ENCODE measurements at regions of chr3 and their contacts with region 1.

Region 1: DNA sequence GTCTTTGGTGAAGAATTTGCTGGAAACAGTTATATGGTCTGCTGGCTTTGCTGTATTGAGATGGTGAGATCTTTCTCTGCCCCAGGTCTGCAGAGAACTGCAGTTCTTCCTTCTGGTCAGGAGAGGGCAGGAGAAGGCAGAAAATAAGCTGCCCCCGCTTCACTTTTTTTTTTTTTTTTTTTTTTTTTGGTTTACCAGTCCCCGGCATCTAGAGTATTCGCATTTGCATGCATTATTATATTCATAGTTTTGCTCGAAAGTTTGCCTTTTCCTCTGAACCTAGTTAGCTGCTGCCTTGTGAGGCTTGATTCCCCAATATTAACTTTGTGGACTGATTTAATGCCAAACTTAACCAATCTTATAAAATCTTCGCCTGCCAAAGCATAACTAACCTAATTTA is 10.6 kb upstream of the PARL start:
- DNase-seq: peak; percentile 86
- CTCF ChIP-seq: peak; percentile 79

Region 2: DNA sequence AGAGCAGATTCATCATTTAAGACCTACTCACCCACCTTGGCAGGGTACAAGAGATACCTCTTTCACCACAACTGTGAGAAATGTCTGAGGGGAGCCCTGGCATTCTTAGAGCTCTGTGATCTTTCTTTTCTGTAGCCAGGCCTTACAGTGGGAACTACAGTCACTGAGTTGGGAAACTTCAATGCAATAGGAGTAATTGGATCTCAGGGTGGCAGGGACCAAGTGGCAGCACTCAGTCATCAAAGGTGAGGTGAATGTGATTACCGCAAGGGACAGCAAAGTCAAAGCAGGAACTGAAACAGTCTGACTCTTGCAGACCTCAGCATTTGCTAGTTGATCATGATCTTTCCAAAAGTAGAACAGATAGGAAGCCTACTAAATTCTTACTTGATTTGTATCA is 459.6 kb before region 1 on chr3:
- CTCF ChIA-PET with region 1: no interaction called
- POLR2A ChIA-PET with region 1: no interaction called
- DNase-seq: peak; percentile 59
- CTCF ChIP-seq: no peak

Region 3: GRCh38 chr3:183878071-183878470 is 17.2 kb before region 1 on chr3:
- CTCF ChIA-PET with region 1: interaction called, 11 read pairs
- POLR2A ChIA-PET with region 1: no interaction called
- DNase-seq: no peak
- CTCF ChIP-seq: no peak

Region 4: GRCh38 chr3:183884427-183885296 is 10.6 kb before region 1 on chr3 and contains the start of gene PARL:
- CTCF ChIA-PET with region 1: interaction called, 55 read pairs
- POLR2A ChIA-PET with region 1: no interaction called
- DNase-seq: peak; percentile 94
- CTCF ChIP-seq: peak; percentile 97

Region 5: DNA sequence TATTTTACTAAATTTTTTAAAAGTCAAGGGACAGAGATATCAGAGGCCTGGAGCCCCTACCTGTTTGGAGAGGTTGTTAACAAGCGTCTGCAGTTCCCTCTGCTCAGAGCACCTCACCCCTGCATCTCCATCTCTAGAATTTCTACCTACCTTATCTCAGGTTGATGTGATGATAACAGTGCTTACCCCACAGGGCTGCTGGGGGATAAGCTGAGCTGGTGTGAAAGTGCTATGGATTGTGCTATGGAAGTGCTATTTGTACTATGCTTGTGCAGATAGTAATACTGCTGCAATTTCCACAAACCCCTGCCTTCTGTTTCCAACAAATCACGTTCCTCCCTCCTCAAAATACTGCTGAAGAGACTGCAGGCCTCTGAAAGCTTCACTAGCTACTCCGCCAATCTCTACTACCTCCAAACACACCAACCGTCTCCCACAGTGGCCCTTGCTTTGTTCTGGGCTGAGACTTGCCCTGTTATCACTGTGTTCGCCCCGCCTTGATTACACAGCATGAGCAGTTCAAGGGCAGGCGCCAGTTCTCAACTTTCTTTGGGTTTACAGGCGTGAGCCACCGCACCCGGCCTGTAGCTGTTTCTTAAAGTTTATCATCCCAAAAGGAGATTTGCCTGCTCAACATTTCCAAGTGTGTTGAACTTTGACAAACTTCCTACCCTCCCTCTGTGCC is 17.7 kb after region 1 on chr3:
- CTCF ChIA-PET with region 1: interaction called, 42 read pairs
- POLR2A ChIA-PET with region 1: no interaction called
- DNase-seq: no peak
- CTCF ChIP-seq: no peak

Region 6: DNA sequence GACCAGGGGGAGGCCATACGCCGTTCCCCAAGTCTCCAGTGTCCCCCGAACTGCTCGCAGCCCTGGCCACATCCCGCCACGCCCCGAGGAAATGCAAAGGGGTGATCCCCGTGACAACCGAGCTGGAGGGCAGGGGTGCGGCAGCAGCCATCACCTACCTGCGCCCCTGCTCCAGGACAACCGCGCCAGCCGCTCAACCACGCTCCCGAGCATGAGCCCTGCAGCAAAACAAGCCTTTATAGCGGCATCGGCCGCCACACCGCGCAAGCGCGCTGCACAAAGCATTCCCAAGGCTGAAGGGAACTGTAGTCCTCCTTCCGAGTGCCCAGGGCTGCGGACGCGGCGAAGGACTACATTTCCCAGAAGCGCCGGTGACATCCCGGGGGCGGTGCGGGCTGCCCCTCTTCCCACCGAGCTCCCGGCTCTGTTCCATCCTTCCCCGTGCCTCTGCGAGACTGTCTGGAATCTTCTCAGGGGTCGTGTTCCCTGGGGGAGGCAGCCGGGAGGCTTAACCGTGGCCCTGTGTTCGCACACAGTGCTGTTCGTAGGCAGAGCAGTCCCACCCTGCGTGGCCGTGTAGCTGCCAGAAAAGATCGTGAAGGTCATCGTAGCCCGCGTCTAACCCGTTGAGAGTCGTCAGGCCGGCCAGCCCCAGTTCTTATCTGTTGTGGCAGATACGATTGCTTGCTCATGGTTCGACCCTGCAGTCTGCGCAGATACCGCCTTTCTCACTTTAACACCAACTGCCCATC is 122.6 kb after region 1 on chr3 and contains the start of gene ABCC5:
- CTCF ChIA-PET with region 1: interaction called, 65 read pairs
- POLR2A ChIA-PET with region 1: no interaction called
- DNase-seq: peak; percentile 94
- CTCF ChIP-seq: no peak

Region 7: DNA sequence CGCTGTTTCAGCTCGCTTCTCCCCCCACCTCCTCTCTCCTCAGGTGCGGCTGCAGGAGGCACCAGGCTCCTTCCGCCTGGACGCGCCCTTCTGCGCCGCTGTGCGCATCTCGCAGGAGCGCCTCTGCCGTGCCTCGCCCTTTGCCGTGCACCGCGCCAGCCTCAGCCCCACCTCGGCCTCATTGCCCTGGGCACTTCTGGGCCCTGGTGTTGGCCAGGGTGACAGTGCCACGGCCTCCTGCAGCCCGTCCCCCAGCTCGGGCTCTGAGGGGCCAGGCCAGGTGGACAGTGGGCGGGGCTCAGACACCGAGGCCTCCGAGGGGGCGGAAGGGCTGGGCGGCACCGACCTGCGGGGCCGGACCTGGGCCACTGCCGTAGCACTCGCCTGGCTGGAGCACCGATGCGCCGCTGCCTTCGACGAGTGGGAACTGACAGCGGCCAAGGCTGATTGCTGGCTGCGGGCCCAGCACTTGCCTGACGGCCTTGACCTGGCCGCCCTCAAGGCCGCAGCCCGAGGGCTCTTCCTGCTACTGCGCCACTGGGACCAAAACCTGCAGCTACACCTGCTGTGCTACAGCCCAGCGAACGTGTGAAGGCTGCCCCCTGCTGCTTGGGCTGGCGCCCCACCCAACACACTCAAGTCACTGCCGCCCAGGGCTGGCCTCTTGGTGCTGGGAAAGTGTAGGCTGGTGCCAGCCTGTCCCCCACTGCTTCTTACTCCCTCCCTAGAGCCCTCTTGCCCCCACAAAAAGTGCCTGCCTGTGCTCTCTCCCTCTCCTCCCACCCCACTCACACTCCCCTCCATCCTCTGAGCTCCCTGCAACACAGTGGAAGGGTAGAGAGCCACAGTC is 346.4 kb after region 1 on chr3:
- CTCF ChIA-PET with region 1: interaction called, 17 read pairs
- POLR2A ChIA-PET with region 1: no interaction called
- DNase-seq: peak; percentile 48
- CTCF ChIP-seq: peak; percentile 49

Region 8: DNA sequence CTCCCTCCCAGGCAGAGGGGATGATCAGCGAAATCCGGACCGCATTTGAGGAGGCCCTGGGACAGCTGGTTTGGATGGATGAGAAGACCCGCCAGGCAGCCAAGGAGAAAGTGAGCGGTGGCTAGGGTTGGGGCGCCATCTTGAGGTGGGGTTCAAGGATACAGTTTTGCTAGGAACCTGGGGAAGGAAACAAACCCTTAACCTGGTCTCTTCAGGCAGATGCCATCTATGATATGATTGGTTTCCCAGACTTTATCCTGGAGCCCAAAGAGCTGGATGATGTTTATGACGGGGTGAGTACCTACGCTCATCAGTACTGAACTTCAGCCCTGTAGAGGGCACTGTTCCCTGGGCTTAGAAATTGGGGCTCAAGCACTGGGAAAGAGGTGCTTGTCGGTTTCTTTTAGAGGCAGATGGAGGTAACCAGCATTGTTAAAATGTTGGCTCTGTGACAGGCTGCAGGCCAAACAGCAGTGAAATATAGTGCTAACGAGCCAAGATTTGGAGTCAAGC is 394.2 kb after region 1 on chr3:
- CTCF ChIA-PET with region 1: interaction called, 16 read pairs
- POLR2A ChIA-PET with region 1: no interaction called
- DNase-seq: peak; percentile 75
- CTCF ChIP-seq: peak; percentile 27

Measured in GM10248 (cell line).